ENCODE measurements at regions of chr1 and their contacts with region 1.

Region 1: DNA sequence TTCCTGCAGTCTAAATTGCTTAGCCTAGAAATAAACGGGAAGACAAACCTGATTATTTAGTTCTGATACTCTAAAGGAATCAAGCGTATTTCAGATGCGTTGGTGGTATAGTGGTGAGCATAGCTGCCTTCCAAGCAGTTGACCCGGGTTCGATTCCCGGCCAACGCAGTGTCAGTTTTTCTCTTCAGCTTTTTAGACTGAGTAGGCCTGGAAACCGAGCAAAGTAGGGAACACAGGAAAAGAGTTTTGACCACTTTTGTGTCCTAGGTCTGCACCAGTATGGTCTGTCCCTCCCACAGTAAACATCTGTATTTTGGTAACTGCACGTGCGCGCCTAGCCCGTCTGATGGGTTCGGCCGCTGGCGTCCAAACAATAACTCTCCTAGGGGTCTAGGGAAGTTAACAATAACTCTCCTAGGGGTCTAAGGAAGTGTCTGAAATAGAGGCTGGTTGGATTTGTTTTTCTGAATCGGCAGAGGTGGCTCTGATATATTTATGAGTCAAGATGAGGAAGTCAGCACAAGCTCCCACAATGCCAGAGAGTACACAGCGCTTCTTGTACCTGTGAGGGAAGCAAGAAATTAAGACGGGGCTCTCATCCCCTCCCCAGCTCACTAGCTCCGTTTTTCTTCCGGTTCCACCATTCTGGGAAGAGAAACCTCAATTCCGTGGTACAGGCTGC is 15.6 kb upstream of the HJV start:
- DNase-seq: peak; percentile 84
- H3K4me3 ChIP-seq: peak overlapping the region; percentile 76
- H3K27ac ChIP-seq: peak overlapping the region; percentile 93
- H3K4me1 ChIP-seq: peaks cover 35% of the 10 kb centered on the region
- CTCF ChIP-seq: no peak

Region 2: GRCh38 chr1:145918993-145919939 is 117.8 kb before region 1 on chr1:
- CTCF ChIA-PET with region 1: no interaction called
- POLR2A ChIA-PET with region 1: no interaction called
- intact Hi-C with region 1: no loop called
- DNase-seq: no peak
- H3K4me3 ChIP-seq: peak overlapping the region; percentile 85
- H3K27ac ChIP-seq: peak overlapping the region; percentile 58
- H3K4me1 ChIP-seq: peaks cover 16% of the 10 kb centered on the region
- CTCF ChIP-seq: no peak

Region 3: GRCh38 chr1:145937436-145937835 is 99.7 kb before region 1 on chr1:
- CTCF ChIA-PET with region 1: no interaction called
- POLR2A ChIA-PET with region 1: no interaction called
- intact Hi-C with region 1: no loop called
- DNase-seq: no peak
- H3K4me3 ChIP-seq: no peak overlapping the region
- H3K27ac ChIP-seq: no peak overlapping the region
- H3K4me1 ChIP-seq: peaks cover 23% of the 10 kb centered on the region
- CTCF ChIP-seq: no peak

Region 4: DNA sequence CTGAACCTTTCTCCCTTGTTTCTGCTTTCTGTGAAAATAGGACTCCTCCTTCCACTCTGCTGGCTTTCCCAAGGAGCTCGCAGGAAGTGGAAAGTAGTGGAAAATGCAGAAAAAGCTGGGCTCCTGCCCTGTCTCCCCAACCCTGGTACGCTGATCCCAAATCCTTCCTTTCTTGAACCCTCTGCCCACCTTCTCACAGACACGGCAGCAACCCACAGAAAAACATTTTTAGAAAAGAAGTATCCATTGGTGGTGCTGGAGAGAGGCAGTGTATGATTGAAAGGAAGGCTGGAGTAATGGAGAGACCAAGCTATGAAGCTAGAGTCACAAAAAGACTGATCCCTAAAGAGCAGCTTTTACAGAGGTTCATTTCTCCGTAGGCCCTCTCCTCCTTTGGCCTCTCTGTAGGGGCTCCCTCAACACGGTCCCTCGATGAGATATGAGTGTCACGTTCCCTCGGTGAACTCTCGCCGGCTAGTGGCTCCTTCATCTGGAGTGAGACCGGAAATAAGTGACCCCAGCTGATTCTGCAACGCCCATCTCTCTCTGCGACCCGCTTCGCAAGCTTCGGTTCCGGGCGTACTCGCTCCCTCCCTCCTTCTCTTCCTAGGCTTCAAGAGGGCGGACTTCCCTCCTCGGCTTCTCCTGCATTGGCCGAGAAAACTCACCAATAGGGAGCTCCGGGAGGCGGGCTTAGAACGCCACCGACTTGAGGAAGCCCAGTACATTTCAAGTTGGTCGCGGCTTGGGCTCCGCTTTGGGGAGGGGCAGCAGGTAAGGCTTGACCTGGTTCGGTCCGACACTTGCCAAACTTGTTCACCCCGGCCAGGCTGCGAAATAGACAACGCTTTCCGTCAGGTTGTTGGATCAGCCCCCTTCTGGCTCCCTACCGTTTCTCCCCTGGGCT is 72.9 kb before region 1 on chr1 and contains the starts of genes ANKRD34A and POLR3GL:
- CTCF ChIA-PET with region 1: no interaction called
- POLR2A ChIA-PET with region 1: interaction called, 11 read pairs
- intact Hi-C with region 1: no loop called
- DNase-seq: peak; percentile 95
- H3K4me3 ChIP-seq: peak within 1 kb of the TSS; percentile 75
- H3K27ac ChIP-seq: peak within 1 kb of the TSS; percentile 36
- H3K4me1 ChIP-seq: peaks cover 53% of the 10 kb centered on the region
- CTCF ChIP-seq: no peak
- total RNA-seq, gene ANKRD34A: 0.62 and 1.9 TPM in 2 replicates
- total RNA-seq, gene POLR3GL: 19.8 and 29.8 TPM in 2 replicates

Region 5: DNA sequence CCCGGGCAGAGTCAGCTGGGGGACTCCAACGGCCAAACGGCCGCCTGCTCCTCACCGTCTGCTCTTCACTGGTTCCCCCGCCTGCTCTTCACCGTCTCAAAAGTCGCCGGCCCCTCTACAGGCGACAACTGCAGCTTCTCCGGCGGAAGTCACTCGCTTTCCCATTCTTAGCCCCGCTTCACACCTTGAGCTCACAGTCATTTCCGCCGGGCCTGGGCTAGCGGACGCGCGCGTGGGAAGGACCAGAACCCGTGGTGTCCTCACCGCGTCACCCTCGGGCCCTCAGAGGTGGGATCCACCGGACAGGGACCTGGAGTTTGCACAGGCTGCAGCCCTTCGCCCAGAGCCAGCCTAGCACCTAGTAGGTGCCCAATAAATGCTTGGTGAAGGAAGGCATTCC is 12.3 kb after region 1 on chr1:
- CTCF ChIA-PET with region 1: no interaction called
- POLR2A ChIA-PET with region 1: interaction called, 82 read pairs
- intact Hi-C with region 1: no loop called
- DNase-seq: no peak
- H3K4me3 ChIP-seq: no peak overlapping the region
- H3K27ac ChIP-seq: no peak overlapping the region
- H3K4me1 ChIP-seq: peaks cover 9% of the 10 kb centered on the region
- CTCF ChIP-seq: no peak

Measured in OCI-LY7 (cell line).